GM12878 (cell line): ENCODE measurements at regions of chr1 and their contacts with region 1.

Region 1: DNA sequence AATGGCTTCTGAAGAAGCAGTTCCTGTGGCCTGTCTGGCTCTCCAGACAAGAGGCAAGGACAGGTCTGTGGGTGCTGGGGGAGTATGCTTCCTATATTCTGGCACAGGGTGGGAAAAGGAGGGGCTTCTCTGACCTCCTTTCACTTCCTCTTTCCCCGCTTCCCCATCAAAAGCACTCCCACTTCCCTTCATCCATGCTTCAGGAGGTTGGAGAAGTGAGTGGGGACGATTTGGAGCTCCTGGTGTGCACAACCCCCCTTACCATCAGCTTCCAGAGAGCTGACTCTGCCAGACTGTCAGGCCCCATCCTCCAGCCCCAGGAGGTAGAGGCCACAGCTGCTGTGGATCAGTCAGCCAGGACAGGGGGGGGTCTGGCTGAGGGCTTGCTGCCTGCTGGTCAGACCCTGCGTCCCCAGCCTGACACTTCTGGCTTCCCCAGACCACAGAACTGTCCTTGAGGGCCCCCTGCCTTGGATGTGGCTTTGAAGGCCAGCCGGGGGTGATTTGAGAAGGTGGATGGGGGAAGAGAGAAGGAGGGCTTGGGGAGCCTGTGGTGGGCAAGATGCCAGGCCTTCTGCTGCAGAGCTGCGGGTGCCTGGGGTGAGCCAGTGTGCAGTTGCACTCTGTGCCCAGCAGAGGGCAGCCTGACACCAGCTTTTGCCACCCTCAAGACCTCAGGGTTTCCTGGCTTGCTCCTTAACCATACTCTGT is 21.5 kb upstream of the TMEM222 start:
- DNase-seq: peak; percentile 32
- ATAC-seq: peak; percentile 96
- H3K4me3 ChIP-seq: no peak overlapping the region
- H3K27ac ChIP-seq: no peak overlapping the region; the same call in 1 of the 2 replicates
- H3K4me1 ChIP-seq: peaks cover 5% of the 10 kb centered on the region
- H3K27me3 ChIP-seq: no peaks in the 10 kb centered on the region
- CTCF ChIP-seq: peak; percentile 99; a peak in 5 of 6 replicates
- EP300 ChIP-seq: no peak
- POLR2A ChIP-seq: no peak
- RAD21 ChIP-seq: peak; percentile 92

Region 2: DNA sequence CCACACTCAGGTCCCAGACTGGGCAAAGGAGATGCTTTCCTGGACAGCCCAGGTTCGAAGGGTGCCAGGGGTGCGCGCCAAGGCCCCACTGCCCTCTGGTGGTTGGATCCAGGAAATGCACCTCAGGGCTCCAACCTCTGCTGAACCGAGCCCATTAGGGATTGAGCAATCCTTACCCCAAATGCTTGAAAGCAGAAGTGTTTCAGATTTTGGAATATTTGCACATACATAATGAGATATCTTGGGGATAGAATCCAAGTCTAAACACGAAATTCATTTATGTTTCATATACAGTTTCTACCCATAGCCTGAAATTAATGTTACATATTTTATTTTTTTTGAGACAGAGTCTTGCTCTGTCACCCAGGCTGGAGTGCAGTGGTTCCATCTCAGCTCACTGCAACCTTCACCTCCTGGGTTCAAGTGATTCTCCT is 203.0 kb before region 1 on chr1:
- CTCF ChIA-PET with region 1: interaction called, 149 read pairs
- POLR2A ChIA-PET with region 1: no interaction called
- RAD21 ChIA-PET with region 1: interaction called, 14 read pairs
- SMC1A ChIA-PET with region 1: interaction called, 11 read pairs
- in situ Hi-C with region 1: no loop called
- intact Hi-C with region 1: no loop called
- DNase-seq: no peak
- ATAC-seq: peak; percentile 78
- H3K4me3 ChIP-seq: no peak overlapping the region
- H3K27ac ChIP-seq: no peak overlapping the region
- H3K4me1 ChIP-seq: peaks cover 14% of the 10 kb centered on the region
- H3K27me3 ChIP-seq: no peaks in the 10 kb centered on the region
- CTCF ChIP-seq: peak; percentile 94 to 97 (median 94)
- EP300 ChIP-seq: no peak
- POLR2A ChIP-seq: no peak
- RAD21 ChIP-seq: peak; percentile 81

Region 3: DNA sequence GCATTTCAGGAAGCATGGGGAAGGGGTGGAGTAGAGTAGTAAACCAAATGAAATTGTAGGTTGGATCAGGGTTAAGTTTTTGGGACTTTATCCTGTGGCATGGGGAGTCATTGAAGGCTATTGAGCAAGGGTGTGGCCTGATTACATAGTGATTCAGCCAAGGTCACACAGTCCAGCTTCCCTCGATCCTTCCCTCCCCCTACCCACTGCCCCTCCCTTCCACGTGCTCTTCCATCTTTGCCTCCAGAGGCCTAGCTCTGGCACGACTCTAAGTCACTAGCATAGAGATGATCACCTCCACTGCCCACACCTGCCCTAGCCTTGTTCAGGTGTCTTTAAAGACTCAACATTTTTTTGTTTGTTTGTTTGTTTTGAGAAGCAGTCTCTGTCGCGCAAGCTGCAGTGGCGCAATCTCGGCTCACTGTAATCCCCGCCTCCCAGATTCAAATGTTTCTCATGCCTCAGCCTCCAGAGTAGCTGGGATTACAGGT is 108.4 kb before region 1 on chr1:
- CTCF ChIA-PET with region 1: interaction called, 10 read pairs
- POLR2A ChIA-PET with region 1: no interaction called
- RAD21 ChIA-PET with region 1: interaction called, 7 read pairs
- SMC1A ChIA-PET with region 1: no interaction called
- in situ Hi-C with region 1: no loop called
- intact Hi-C with region 1: no loop called
- DNase-seq: no peak
- ATAC-seq: no peak
- H3K4me3 ChIP-seq: no peak overlapping the region
- H3K27ac ChIP-seq: no peak overlapping the region
- H3K4me1 ChIP-seq: no peaks in the 10 kb centered on the region
- H3K27me3 ChIP-seq: no peaks in the 10 kb centered on the region; a peak in 1 of 4 replicates
- CTCF ChIP-seq: no peak
- EP300 ChIP-seq: no peak
- POLR2A ChIP-seq: no peak
- RAD21 ChIP-seq: no peak

Region 4: GRCh38 chr1:27314169-27314568 is 13.7 kb after region 1 on chr1:
- CTCF ChIA-PET with region 1: interaction called, 27 read pairs
- POLR2A ChIA-PET with region 1: no interaction called
- RAD21 ChIA-PET with region 1: no interaction called
- SMC1A ChIA-PET with region 1: interaction called, 4 read pairs
- in situ Hi-C with region 1: no loop called
- intact Hi-C with region 1: no loop called
- DNase-seq: no peak
- ATAC-seq: no peak
- H3K4me3 ChIP-seq: no peak overlapping the region
- H3K27ac ChIP-seq: no peak overlapping the region
- H3K4me1 ChIP-seq: no peaks in the 10 kb centered on the region
- H3K27me3 ChIP-seq: no peaks in the 10 kb centered on the region; a peak in 1 of 4 replicates
- CTCF ChIP-seq: no peak
- EP300 ChIP-seq: no peak
- POLR2A ChIP-seq: no peak
- RAD21 ChIP-seq: no peak

Region 5: DNA sequence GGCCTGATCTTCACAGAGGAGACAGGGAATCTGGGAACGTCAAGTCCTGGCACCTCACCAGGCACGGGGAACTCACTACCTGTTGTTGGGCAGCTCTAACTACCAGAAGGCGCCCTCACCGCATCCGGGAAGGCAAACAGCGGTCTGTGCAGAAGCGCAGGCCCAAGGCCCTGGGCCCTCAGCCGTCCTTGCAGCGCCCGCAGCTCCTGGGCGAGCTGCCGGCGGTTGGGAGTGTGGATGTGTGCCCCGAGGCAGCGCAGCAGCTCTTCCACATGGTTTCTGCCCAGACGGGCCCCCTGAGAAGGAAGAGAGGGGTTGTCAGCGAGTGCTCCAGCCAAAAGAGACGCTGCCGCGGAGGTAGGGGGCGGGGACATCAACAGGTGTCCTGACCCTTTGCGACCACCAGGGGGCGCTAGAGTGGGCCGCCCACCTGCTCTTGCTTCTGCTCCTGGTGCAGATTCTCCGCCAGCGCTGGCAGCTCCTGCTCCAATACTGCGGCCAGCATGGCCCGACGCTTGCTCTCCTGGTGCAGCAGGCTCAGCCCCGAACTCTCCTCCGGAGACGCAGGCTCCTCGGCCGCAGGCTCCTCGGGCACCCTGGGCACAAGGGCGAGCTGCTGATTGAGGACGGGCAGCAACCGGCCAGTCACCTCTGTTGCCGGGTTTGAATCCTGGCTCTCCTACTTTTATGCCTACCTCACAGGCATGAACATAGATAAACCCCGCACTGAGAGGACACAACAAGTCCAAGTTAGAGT is 57.0 kb after region 1 on chr1:
- CTCF ChIA-PET with region 1: interaction called, 77 read pairs
- POLR2A ChIA-PET with region 1: no interaction called
- RAD21 ChIA-PET with region 1: interaction called, 5 read pairs
- SMC1A ChIA-PET with region 1: no interaction called
- in situ Hi-C with region 1: no loop called
- intact Hi-C with region 1: no loop called
- DNase-seq: no peak
- ATAC-seq: peak; percentile 88
- H3K4me3 ChIP-seq: peak overlapping the region; percentile 54; the same call in 1 of the 2 replicates
- H3K27ac ChIP-seq: no peak overlapping the region
- H3K4me1 ChIP-seq: peaks cover 13% of the 10 kb centered on the region
- H3K27me3 ChIP-seq: no peaks in the 10 kb centered on the region; a peak in 1 of 4 replicates
- CTCF ChIP-seq: peak; percentile 90 to 96 (median 93); a peak in 5 of 6 replicates
- EP300 ChIP-seq: no peak
- POLR2A ChIP-seq: no peak
- RAD21 ChIP-seq: peak; percentile 49

Region 6: GRCh38 chr1:27542408-27543273 is 242.1 kb after region 1 on chr1:
- CTCF ChIA-PET with region 1: no interaction called
- POLR2A ChIA-PET with region 1: no interaction called
- RAD21 ChIA-PET with region 1: no interaction called
- SMC1A ChIA-PET with region 1: no interaction called
- in situ Hi-C with region 1: no loop called
- intact Hi-C with region 1: no loop called
- DNase-seq: no peak
- ATAC-seq: no peak; the same call in 1 of the 3 replicates
- H3K4me3 ChIP-seq: no peak overlapping the region
- H3K27ac ChIP-seq: no peak overlapping the region
- H3K4me1 ChIP-seq: no peaks in the 10 kb centered on the region
- H3K27me3 ChIP-seq: no peaks in the 10 kb centered on the region
- CTCF ChIP-seq: no peak
- EP300 ChIP-seq: no peak
- POLR2A ChIP-seq: no peak
- RAD21 ChIP-seq: no peak